Heart right ventricle (tissue), 16 donors: ENCODE measurements at regions of chr10 and their contacts with region 1.

Region 1: DNA sequence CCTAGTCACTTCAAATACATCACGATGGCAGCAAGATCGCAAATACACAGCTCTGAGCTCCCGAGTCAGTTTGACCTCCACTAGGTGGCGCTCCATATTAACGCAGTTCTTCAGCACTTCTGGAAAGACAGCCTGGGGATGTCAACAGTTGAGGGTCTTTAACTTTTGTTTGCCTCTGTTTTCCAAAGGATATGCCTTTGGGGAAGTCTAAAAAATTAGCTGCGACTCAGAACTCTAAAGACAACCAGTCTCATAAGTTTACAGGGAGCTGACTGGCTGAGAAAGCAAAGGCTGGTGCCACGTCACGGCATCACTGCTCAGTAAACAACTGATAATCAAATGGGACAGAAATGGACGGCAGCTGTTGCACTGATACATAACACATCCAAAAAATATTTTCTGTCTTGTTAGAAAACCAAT is 458.8 kb downstream of the SORCS1 start:
- DNase-seq: peak; percentile 20 to 56
- ATAC-seq: peak in 6 of 8 donors; percentile 42 to 79 (median 71)
- H3K4me3 ChIP-seq: peak overlapping the region in 2 of 10 donors; percentile 10 to 14
- H3K27ac ChIP-seq: no peak overlapping the region
- H3K4me1 ChIP-seq: no peaks in the 10 kb centered on the region
- H3K27me3 ChIP-seq: peaks cover 0 to 13% (median 0%) of the 10 kb centered on the region in 7 donors
- CTCF ChIP-seq: peak; percentile 54 to 79 (median 75)

Region 2: GRCh38 chr10:107144490-107144889 is 438.8 kb after region 1 on chr10:
- intact Hi-C with region 1: loop called in 1 of 10 experiments (anchors 10 kb)
- DNase-seq: no peak
- ATAC-seq: peak in 1 of 8 donors; percentile 59
- H3K4me3 ChIP-seq: no peak overlapping the region
- H3K27ac ChIP-seq: no peak overlapping the region
- H3K4me1 ChIP-seq: no peaks in the 10 kb centered on the region
- H3K27me3 ChIP-seq: no peaks in the 10 kb centered on the region
- CTCF ChIP-seq: peak in 3 of 9 donors; percentile 9 to 30 (median 11)

Region 3: GRCh38 chr10:108544494-108545120 is 1838.9 kb after region 1 on chr10:
- intact Hi-C with region 1: loop called in 1 of 10 experiments (anchors 10 kb)
- DNase-seq: peak in 1 of 2 donors; percentile 47
- ATAC-seq: peak in 1 of 8 donors; percentile 73
- H3K4me3 ChIP-seq: no peak overlapping the region
- H3K27ac ChIP-seq: no peak overlapping the region
- H3K4me1 ChIP-seq: no peaks in the 10 kb centered on the region
- H3K27me3 ChIP-seq: peaks cover 0 to 3% (median 0%) of the 10 kb centered on the region in 7 donors
- CTCF ChIP-seq: peak; percentile 28 to 94 (median 75)